Common myeloid progenitor, CD34-positive (primary cell): ENCODE measurements at regions of chr7 and their contacts with region 1.

Region 1: DNA sequence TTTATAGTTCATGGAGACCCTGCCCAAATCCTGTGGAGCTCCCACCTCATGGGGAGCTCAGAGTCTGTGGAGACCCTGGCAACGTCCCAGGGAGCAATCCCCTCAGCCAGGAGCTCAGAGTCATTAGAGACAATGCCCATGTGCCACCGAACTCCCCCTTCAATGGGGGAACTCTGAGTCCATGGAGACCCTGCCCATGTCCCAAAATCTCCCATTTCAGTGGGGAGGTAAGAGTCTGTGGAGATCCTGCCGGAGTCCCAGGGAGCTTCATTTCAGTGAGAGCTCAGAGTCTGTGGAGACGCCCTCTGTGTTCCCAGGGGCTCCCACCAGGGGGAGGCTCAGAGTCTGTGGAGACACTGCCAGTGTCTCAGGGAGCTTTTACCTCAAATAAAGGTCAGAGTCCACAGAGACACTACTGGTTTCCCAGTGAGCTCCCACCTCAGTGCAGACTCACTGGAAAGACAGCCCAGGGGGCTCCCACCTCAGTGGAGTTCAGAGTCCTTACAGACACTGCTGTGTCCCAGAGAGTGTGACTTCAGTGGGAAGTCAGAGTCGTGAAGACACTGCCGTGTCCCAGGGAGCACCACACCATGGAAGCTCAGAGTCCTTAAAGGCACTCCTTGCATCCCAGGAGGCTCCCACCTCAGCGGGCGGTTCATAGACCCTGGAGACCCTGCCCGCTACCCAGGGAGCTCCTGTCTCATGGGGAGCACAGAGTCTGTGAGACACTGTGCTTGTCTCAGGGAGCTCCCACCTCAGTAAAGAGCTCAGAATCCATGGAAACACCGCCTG is 5.0 kb downstream of the MYO1G start:
- DNase-seq: peak in 2 of 3 donors; percentile 46 to 55
- H3K4me3 ChIP-seq: no peak overlapping the region
- H3K27ac ChIP-seq: peak overlapping the region in 1 of 2 experiments; percentile 22
- H3K4me1 ChIP-seq: peaks cover 0 to 42% (median 30%) of the 10 kb centered on the region in 4 experiments
- H3K27me3 ChIP-seq: no peaks in the 10 kb centered on the region

Region 2: DNA sequence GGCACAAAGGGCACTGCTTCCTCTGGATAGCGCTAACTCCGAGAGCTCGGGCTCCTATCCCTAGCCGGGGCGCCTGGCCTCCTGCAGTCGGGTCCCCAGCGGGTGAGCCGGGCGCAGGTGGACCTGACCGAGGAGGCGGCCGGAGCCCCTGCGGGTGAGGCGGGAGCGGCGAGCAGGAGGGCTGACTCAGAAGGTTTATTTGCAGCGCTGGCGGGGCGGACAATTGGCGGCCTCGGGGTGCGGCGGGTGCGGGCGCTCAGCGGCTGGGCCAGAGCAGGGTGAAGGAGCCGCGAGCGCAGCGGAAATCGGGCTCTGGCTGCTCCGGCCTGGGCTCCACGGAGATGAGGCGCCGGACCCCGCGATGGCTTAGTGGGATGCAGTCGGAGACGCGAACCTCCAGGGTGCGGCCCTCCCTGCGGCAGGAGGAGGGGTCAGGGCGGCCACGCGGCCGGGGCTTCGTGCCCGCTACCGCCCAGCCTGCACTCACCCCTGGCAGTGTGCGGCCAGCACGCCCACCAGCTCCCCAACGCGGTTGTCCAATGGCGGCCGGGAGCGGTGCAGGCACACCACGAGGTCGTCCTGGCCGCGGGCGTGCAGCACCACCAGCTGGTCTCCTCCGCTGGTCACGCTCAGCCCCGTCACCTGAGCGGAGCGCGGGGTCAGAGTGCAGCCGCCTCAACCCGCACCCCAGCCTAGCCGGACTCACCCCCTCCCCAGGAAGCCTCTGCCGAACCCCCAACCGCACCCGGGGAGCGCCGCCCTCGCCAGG is 11.1 kb before region 1 on chr7:
- CTCF ChIA-PET with region 1: interaction called, 41 read pairs
- POLR2A ChIA-PET with region 1: no interaction called
- DNase-seq: peak in 1 of 3 donors; percentile 47
- H3K4me3 ChIP-seq: peak overlapping the region in 1 of 7 experiments; percentile 19
- H3K27ac ChIP-seq: no peak overlapping the region
- H3K4me1 ChIP-seq: peaks cover 0 to 4% (median 3%) of the 10 kb centered on the region in 4 experiments
- H3K27me3 ChIP-seq: no peaks in the 10 kb centered on the region

Region 3: DNA sequence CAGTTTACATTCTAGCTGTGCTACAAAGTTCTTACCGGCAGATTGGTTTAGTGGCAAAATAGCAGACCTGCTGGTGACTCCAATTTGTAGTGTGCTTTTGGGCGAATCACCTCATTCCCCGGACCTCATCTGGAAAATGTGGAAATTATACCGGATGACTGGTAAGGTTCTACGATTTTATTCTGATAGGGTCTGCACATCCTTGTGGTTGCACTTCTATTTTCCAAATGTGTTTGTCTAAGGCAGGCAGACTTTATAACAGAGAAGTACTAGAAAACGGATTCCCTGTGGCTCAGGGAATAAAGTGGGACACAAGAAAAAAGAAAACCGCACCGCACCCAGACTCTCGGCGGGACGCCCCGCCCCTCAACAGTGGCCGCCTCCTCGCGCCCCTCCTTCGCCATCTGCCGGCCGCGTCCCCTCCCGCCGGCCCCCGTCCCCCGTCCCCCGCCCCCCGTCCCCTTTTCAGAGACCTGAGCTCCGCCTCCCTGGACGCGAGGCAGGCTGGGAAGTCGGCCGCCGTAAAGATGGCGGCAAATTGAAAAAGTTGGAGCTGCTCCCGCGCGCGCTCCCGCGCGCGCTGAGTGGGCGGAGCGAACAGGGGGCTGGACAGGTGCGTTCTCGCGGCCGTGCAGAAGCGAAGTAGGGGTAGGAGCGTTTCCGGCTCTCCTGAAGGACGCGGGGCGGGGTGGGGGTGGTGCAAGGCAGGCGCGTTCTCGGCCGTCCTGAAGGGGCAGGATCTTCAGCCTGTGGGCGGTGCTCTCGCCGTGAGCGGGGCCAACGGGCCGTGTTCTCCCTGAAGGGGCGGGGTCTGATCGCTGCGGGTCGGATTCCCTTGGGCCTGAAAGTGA is 25.7 kb after region 1 on chr7:
- CTCF ChIA-PET with region 1: interaction called, 204 read pairs
- POLR2A ChIA-PET with region 1: interaction called, 19 read pairs
- DNase-seq: peak; percentile 99
- H3K4me3 ChIP-seq: peak overlapping the region; percentile 59 to 92 (median 84)
- H3K27ac ChIP-seq: peak overlapping the region; percentile 80 to 88
- H3K4me1 ChIP-seq: peaks cover 24 to 64% (median 55%) of the 10 kb centered on the region in 4 experiments
- H3K27me3 ChIP-seq: no peaks in the 10 kb centered on the region

Region 4: GRCh38 chr7:45021604-45022296 is 47.9 kb after region 1 on chr7:
- CTCF ChIA-PET with region 1: interaction called, 138 read pairs
- POLR2A ChIA-PET with region 1: no interaction called
- DNase-seq: peak; percentile 33 to 83 (median 75)
- H3K4me3 ChIP-seq: no peak overlapping the region
- H3K27ac ChIP-seq: peak overlapping the region in 1 of 2 experiments; percentile 47
- H3K4me1 ChIP-seq: peaks cover 5 to 41% (median 29%) of the 10 kb centered on the region in 4 experiments
- H3K27me3 ChIP-seq: no peaks in the 10 kb centered on the region

Region 5: GRCh38 chr7:45073786-45074527 is 100.2 kb after region 1 on chr7:
- CTCF ChIA-PET with region 1: interaction called, 23 read pairs
- POLR2A ChIA-PET with region 1: no interaction called
- DNase-seq: no peak
- H3K4me3 ChIP-seq: no peak overlapping the region
- H3K27ac ChIP-seq: no peak overlapping the region
- H3K4me1 ChIP-seq: no peaks in the 10 kb centered on the region
- H3K27me3 ChIP-seq: no peaks in the 10 kb centered on the region

Region 6: DNA sequence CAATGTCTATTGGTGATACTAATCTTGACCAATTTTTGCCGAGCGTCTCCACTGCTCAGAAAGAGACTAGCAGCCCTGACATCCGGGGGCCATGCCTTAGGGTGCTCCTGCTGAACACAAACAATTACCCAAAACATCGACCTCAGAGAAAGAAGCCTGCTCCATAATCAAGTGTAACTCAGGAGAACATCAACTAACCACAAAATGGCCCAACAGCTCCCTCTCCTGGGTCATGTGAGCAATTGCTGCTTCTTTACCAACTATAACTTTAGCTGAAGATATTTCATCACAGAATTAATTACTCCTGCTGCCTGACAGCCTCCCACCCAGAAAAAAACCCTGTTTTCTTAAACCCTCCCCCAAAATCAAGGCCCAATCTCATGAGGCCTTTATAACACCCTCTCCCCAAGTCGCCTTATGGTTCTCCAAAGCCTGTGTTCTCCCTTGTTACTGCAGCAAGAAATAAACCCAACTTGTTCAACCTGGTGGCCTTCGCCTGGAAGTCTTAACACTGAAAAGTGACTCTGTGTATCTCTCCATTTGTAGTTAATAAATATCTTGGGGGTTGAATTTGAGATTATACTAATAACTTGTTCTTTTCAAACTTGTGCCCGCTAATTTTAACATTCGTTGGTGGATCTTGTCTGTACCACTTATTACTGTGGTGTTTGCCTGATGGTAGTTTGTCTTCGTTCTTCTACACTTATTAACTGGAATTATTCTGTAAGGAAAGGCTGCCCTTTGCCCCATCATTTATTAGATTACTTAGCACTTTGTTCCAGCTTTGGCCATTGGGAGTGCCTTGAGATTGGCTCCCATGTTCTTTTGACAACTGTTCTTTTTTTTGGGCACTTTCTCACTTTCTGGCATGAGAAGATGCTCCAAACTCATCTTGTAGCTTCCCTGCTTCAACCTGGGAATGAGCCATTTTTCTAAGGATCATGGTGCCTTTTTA is 162.6 kb after region 1 on chr7:
- CTCF ChIA-PET with region 1: interaction called, 142 read pairs
- POLR2A ChIA-PET with region 1: interaction called, 4 read pairs
- DNase-seq: peak; percentile 80 to 91 (median 85)
- H3K4me3 ChIP-seq: no peak overlapping the region
- H3K27ac ChIP-seq: no peak overlapping the region
- H3K4me1 ChIP-seq: peaks cover 0 to 19% (median 2%) of the 10 kb centered on the region in 4 experiments
- H3K27me3 ChIP-seq: no peaks in the 10 kb centered on the region